ENCODE measurements at regions of chr4 and their contacts with region 1.

Region 1: DNA sequence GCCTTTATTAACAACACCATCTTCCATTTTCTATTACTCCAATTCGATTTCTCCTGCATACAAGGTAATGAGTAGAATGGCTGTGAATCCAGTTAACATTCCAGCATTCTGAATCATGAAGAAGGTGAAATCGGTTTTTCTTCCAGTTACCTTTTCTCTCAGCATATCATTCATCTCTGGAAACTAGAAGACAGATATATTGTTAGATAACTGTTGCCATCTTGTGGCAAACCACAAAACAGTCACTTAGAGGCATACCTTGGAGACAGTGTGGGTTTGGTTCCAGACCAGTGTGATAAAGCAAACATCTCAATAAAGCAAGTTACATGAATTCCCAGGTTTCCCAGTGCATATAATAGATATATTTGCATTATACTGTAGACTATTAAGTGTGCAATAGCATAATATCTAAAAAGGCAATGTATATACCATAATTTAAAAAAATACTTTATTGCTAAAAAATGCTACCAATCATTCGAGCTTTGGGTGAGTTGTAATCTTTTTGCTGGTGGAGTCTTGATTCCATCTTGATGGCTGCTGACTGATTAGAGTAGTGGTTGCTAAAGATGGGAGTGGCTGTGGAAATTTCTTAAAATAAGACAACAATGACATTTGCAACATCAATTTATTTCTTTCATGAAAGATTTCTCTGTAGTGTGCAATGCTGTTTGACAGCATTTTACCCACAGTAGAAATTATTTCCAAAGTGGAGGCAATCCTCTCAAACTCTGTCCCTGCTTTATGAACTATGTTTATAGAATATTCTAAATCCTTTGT is 82.1 kb downstream of the SLC39A8 start:
- DNase-seq: no peak
- ATAC-seq: peak; percentile 79
- H3K4me3 Mint-ChIP-seq: no peak overlapping the region
- H3K27ac Mint-ChIP-seq: no peak overlapping the region
- H3K4me1 Mint-ChIP-seq: peaks cover 2% of the 10 kb centered on the region
- H3K27me3 Mint-ChIP-seq: no peaks in the 10 kb centered on the region
- CTCF ChIP-seq: peak; percentile 25

Region 2: GRCh38 chr4:100421361-100421978 is 1841.7 kb before region 1 on chr4:
- CTCF ChIA-PET with region 1: no interaction called
- POLR2A ChIA-PET with region 1: no interaction called
- intact Hi-C with region 1: loop called (anchors 1 kb)
- DNase-seq: no peak
- ATAC-seq: no peak
- H3K4me3 Mint-ChIP-seq: no peak overlapping the region
- H3K27ac Mint-ChIP-seq: no peak overlapping the region
- H3K4me1 Mint-ChIP-seq: no peaks in the 10 kb centered on the region
- H3K27me3 Mint-ChIP-seq: peaks cover 8% of the 10 kb centered on the region
- CTCF ChIP-seq: no peak

Region 3: GRCh38 chr4:100907465-100908454 is 1355.4 kb before region 1 on chr4:
- CTCF ChIA-PET with region 1: no interaction called
- POLR2A ChIA-PET with region 1: no interaction called
- intact Hi-C with region 1: loop called (anchors 2 kb)
- DNase-seq: no peak
- ATAC-seq: no peak
- H3K4me3 Mint-ChIP-seq: no peak overlapping the region
- H3K27ac Mint-ChIP-seq: no peak overlapping the region
- H3K4me1 Mint-ChIP-seq: no peaks in the 10 kb centered on the region
- H3K27me3 Mint-ChIP-seq: no peaks in the 10 kb centered on the region
- CTCF ChIP-seq: no peak

Region 4: GRCh38 chr4:101086801-101087586 is 1176.2 kb before region 1 on chr4:
- CTCF ChIA-PET with region 1: no interaction called
- POLR2A ChIA-PET with region 1: no interaction called
- intact Hi-C with region 1: loop called (anchors 10 kb)
- DNase-seq: no peak
- ATAC-seq: no peak
- H3K4me3 Mint-ChIP-seq: no peak overlapping the region
- H3K27ac Mint-ChIP-seq: peak overlapping the region; percentile 76
- H3K4me1 Mint-ChIP-seq: peaks cover 60% of the 10 kb centered on the region
- H3K27me3 Mint-ChIP-seq: no peaks in the 10 kb centered on the region
- CTCF ChIP-seq: no peak

Region 5: DNA sequence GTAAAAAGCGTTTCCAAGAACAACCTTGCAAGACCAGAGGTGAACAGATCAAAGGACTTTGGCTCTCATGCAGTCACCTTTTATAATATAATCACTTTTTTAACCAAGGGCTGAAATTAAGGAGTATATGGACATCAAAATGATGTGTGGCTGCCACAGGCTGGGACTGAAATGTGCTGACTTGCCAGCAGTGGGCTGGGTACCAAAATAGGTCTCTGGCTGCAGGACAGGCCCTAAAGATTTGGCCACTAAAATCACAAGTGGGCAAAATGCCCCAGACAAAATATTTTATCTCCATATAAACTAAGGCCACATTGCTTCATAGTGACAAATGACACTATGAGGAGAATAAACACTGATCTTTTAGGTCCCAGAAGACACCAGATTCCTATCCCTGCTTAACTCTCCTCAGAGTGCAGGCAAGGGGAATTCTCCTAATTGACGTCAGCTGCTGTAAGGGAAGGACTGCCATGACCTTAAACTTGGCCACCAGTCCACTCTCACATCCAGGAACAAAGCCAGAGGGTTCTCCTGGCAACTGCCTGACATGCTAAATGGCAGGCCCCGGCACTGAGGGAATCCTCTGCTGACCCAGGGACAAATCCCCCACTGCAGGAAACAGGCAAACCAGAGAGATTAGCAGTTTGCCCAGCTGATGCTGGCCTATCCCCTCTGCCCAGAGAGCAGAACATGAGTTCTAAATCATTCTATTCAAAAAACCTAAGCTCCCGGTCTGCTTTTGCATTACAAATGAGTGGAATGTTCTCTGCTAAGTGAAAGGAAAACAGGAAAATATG is 1071.7 kb before region 1 on chr4:
- CTCF ChIA-PET with region 1: no interaction called
- POLR2A ChIA-PET with region 1: no interaction called
- intact Hi-C with region 1: loop called (anchors 5 kb)
- DNase-seq: no peak
- ATAC-seq: no peak
- H3K4me3 Mint-ChIP-seq: no peak overlapping the region
- H3K27ac Mint-ChIP-seq: peak overlapping the region; percentile 50
- H3K4me1 Mint-ChIP-seq: peaks cover 47% of the 10 kb centered on the region
- H3K27me3 Mint-ChIP-seq: no peaks in the 10 kb centered on the region
- CTCF ChIP-seq: no peak

Region 6: DNA sequence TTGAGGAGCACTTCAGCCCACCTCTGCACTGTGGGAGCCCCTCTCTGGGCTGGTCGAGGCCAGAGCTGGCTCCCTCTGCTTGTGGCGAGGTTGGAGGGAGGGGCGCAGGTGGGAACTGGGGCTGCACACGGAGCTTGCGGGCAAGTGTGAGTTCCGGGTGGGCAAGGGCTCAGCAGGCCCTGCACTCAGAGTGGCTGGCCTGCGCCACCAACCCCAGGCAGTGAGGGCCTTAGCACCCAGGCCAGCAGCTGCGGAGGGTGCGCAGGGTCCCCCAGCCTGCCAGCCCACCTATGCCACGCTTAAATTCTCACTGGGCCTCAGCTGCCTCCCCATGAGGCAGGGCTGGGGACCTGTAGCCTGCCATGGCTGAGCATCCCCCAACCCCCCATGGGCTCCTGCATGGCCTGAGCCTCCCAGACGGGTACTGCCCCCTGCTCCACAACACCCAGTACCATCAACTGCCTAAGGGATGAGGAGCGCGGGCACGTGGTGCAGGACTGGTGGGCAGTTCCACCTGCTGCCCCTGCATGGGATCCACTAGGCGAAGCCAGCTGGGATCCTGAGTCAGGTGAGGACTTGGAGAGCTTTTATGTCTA is 28.9 kb before region 1 on chr4:
- CTCF ChIA-PET with region 1: no interaction called
- POLR2A ChIA-PET with region 1: no interaction called
- intact Hi-C with region 1: no loop called
- DNase-seq: no peak
- ATAC-seq: no peak
- H3K4me3 Mint-ChIP-seq: no peak overlapping the region
- H3K27ac Mint-ChIP-seq: no peak overlapping the region
- H3K4me1 Mint-ChIP-seq: no peaks in the 10 kb centered on the region
- H3K27me3 Mint-ChIP-seq: peaks cover 2% of the 10 kb centered on the region
- CTCF ChIP-seq: no peak